Cardiac septum (tissue), 1 donor: ENCODE measurements at regions of chr12 and their contacts with region 1.

Region 1: DNA sequence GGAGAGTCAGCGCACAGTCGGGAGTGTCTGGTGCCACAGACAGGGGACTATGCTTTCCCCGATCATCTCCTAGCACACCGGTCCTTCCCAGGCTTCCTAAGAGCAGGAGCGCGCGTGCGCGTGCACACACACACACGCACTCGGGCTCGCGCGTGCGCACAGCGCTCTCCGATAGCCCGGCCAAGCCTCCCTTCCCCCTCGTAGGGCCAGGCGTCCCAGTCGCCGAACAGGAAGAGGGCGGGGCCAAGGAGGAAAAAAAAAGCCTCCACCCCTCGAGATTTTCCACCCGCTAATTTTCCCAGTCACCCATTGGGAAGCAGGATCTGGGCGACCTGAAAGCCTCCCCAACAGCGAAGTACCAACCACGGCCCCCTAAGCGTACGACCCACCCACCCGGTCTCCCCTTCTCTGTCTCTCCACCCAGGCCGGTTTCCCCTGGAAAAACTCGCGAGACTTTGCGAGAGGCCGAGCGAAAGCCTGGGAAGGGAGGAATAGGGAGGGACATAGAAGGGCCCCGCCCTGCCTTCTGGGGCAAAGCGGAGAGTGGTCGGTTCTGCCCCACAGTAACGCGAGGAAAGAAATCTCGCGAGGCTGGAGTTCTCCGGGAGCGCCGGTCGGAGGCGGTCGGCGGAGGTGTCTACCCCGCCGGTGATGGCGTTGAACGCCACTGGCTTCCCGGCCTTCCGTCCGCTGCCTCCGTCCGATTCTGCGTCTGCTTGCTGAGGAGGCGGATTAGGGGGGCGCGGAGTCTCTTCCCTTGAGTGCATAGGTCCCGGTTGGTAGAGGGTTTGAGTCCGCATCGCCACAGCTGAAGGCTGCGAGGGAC is at the starts of genes FGFR1OP2 and INTS13:
- DNase-seq: peak; percentile 99
- total RNA-seq, gene FGFR1OP2: 37.4 TPM
- total RNA-seq, gene INTS13: 15.5 TPM

Region 2: GRCh38 chr12:26704684-26705460 is 233.2 kb before region 1 on chr12:
- intact Hi-C with region 1: no loop called
- DNase-seq: no peak

Region 3: DNA sequence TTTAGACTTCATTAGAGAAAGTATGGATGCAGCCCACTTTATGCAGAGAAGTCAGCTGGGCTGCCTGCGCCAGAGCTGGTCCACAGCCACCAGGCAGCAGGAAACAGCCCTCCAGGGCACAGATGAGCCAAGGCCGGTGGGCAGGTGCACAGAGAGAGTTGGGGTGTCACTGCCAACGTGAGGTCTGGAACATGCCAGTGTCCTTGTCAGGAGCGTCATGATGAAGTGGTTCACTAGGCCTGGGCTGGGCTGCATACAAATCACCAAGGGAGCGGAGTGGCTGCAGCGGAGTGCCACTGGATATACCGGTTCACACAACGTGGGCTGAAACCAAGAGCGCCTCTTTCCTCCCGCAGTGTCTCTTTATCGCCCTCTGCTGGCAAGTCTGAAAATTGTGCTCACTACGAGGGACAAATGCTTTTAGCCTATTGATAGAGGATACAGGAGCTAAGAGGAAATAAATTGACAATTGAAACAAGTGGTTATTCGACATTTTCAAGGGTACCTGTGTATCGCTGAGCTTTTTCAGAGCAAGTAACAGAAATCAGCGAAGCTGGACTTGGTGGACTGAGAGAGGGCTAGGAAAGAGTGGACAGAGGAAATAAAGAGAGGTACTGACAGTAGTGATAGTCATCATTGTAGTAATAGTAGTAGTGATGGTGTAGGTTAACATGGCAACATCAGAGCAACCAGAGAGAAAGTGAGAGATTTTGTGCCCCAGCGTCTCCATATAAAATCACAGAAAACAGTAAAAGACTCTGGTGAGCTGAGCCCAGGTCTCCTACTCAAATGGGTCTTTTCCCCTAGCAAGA is 53.1 kb before region 1 on chr12:
- intact Hi-C with region 1: no loop called
- DNase-seq: peak; percentile 88

Region 4: GRCh38 chr12:26976687-26977086 is 38.6 kb after region 1 on chr12:
- intact Hi-C with region 1: no loop called
- DNase-seq: no peak

Region 5: DNA sequence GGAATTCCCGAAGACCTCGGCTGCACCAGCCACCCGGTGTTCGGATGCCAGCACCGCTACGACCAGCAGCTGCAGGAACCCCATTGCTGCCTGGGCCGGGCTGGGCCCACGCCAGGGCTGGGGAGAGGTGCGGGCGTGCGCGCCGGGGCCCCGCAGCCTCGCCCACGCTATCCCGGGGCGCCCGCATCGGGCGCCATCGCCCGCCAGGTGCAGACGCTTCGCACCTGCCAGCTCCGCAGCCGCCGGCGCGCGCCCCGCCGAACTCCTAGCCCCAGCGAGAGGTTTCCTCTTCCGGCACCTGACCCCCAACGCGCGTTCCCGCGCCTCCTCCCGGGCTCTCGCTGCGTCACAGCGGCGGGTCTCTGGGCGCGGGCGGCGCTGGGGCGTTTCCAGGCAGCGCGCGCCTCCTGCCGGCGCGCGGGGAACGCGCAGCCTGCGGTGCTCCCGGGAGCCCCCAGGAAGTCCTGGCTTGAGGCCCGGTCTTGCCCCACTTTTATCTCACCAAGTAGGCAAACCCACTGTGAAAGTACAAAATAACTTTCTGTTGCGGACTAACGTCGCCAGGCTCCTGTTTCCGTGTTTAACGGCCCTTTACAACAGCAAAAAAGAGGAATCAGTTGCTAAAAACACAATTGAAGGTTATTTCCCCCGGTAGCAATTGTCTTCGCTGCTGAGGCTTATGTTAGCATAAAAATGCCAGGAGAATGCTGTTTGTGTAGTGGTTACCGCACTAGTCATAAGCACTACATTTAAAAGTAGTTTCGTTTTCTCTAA is 76.2 kb after region 1 on chr12 and contains the start of gene TM7SF3:
- intact Hi-C with region 1: loop called (anchors 2 kb)
- DNase-seq: peak; percentile 99
- total RNA-seq, gene TM7SF3: 23.7 TPM

Region 6: GRCh38 chr12:27112891-27113290 is 174.8 kb after region 1 on chr12:
- intact Hi-C with region 1: no loop called
- DNase-seq: no peak